GM12878 (cell line): ENCODE measurements at regions of chr7 and their contacts with region 1.

Region 1: GRCh38 chr7:876167-876967 is at the start of gene GET4:
- DNase-seq: peak; percentile 80
- ATAC-seq: peak; percentile 90
- H3K4me3 ChIP-seq: peak within 1 kb of the TSS; percentile 86
- H3K27ac ChIP-seq: peak within 1 kb of the TSS; percentile 59
- H3K4me1 ChIP-seq: no peaks in the 10 kb centered on the region; the same call in 1 of the 2 replicates
- H3K27me3 ChIP-seq: no peaks in the 10 kb centered on the region
- CTCF ChIP-seq: peak; percentile 17 to 29 (median 19); a peak in 3 of 6 replicates
- EP300 ChIP-seq: no peak; a peak in 1 of 4 replicates
- POLR2A ChIP-seq: peak; percentile 92
- RAD21 ChIP-seq: no peak
- polyA plus RNA-seq, gene GET4: 0.66 to 2.3 TPM

Region 2: GRCh38 chr7:322111-322671 is 554.2 kb before region 1 on chr7:
- CTCF ChIA-PET with region 1: interaction called, 15 read pairs
- POLR2A ChIA-PET with region 1: no interaction called
- RAD21 ChIA-PET with region 1: interaction called, 6 read pairs
- SMC1A ChIA-PET with region 1: interaction called, 3 read pairs
- in situ Hi-C with region 1: loop called (anchors 5 kb)
- intact Hi-C with region 1: loop called (anchors 1 kb)
- DNase-seq: no peak
- ATAC-seq: peak; percentile 99
- H3K4me3 ChIP-seq: no peak overlapping the region
- H3K27ac ChIP-seq: no peak overlapping the region
- H3K4me1 ChIP-seq: no peaks in the 10 kb centered on the region
- H3K27me3 ChIP-seq: no peaks in the 10 kb centered on the region
- CTCF ChIP-seq: peak; percentile 63 to 85 (median 74); a peak in 5 of 6 replicates
- EP300 ChIP-seq: no peak
- POLR2A ChIP-seq: no peak
- RAD21 ChIP-seq: peak; percentile 91

Region 3: DNA sequence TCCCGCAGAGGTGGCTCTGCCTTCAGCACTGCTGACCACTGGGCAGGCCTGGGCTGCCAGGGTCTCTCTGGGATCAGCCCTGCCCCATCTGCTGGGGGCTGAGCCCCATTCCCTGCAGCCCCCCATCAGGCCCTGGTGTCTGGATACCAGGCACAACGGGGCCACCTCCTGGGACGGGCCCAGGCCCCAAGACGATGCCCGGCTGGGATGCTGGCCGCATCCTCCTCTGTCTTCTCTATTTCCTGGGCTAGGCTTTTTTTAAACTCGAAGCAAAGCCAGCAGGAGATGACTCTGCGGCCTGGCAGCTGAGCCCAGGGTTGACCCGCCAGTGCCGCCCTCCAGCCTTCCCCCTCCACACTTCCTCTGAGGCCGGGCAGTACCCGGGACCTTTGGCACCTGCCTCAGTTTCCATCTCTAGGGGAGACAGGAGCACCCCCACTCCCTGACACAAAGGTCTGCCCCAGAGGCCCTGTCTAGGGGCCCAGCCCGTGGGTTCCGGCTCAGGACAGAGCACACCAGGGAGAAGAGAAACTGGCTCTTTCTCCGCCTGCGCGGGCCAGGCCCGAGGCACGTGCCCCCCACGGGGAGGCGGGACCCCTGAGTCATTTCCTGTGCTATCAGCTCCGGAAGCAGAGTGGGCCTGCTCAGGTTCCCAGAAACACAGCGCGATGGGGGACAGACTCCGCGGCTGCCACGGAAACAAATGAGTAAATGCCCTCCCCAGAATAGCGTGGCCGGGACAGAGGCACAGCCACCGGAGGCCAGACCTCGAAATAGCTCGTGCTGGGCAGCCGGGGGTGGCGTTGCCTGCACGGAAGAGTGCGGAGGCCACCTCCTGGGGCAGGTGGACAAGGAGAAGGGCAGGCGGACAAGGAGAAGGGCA is 272.1 kb before region 1 on chr7:
- CTCF ChIA-PET with region 1: no interaction called
- POLR2A ChIA-PET with region 1: no interaction called
- RAD21 ChIA-PET with region 1: no interaction called
- SMC1A ChIA-PET with region 1: no interaction called
- in situ Hi-C with region 1: no loop called
- intact Hi-C with region 1: loop called (anchors 5 kb)
- DNase-seq: peak; percentile 71
- ATAC-seq: peak; percentile 81
- H3K4me3 ChIP-seq: peak overlapping the region; percentile 80
- H3K27ac ChIP-seq: peak overlapping the region; percentile 98
- H3K4me1 ChIP-seq: peaks cover 49% of the 10 kb centered on the region
- H3K27me3 ChIP-seq: no peaks in the 10 kb centered on the region
- CTCF ChIP-seq: no peak
- EP300 ChIP-seq: no peak; a peak in 1 of 4 replicates
- POLR2A ChIP-seq: peak; percentile 96
- RAD21 ChIP-seq: no peak

Region 4: GRCh38 chr7:816300-816750 is 60.0 kb before region 1 on chr7:
- CTCF ChIA-PET with region 1: interaction called, 15 read pairs
- POLR2A ChIA-PET with region 1: no interaction called
- RAD21 ChIA-PET with region 1: interaction called, 7 read pairs
- SMC1A ChIA-PET with region 1: interaction called, 3 read pairs
- in situ Hi-C with region 1: no loop called
- intact Hi-C with region 1: loop called (anchors 5 kb)
- DNase-seq: peak; percentile 84
- ATAC-seq: peak; percentile 94
- H3K4me3 ChIP-seq: peak overlapping the region; percentile 57; the same call in 1 of the 2 replicates
- H3K27ac ChIP-seq: no peak overlapping the region; the same call in 1 of the 2 replicates
- H3K4me1 ChIP-seq: peaks cover 24% of the 10 kb centered on the region
- H3K27me3 ChIP-seq: no peaks in the 10 kb centered on the region
- CTCF ChIP-seq: no peak
- EP300 ChIP-seq: no peak
- POLR2A ChIP-seq: peak; percentile 83
- RAD21 ChIP-seq: no peak

Region 5: DNA sequence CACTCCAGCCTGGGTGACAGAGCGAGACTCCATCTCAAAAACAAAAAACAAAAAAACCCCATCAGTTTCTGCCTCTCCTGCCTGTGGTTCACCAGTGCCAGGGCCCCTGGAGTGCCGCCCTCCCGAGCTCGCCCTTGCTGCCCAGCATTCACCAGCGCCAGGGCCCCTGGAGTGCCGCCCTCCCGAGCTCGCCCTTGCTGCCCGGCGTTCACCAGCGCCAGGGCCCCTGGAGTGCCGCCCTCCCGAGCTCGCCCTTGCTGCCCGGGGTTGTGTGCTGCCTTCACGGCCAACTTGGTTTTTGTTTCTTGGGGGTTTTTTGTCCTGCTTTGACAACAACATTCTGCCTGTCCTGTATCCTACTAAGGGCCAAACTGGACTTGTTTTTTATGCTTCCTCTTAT is 13.3 kb before region 1 on chr7:
- CTCF ChIA-PET with region 1: interaction called, 13 read pairs
- POLR2A ChIA-PET with region 1: no interaction called
- RAD21 ChIA-PET with region 1: interaction called, 3 read pairs
- SMC1A ChIA-PET with region 1: interaction called, 3 read pairs
- in situ Hi-C with region 1: no loop called
- intact Hi-C with region 1: no loop called
- DNase-seq: no peak
- ATAC-seq: no peak
- H3K4me3 ChIP-seq: no peak overlapping the region
- H3K27ac ChIP-seq: no peak overlapping the region
- H3K4me1 ChIP-seq: no peaks in the 10 kb centered on the region
- H3K27me3 ChIP-seq: no peaks in the 10 kb centered on the region
- CTCF ChIP-seq: no peak
- EP300 ChIP-seq: no peak
- POLR2A ChIP-seq: no peak
- RAD21 ChIP-seq: no peak

Region 6: DNA sequence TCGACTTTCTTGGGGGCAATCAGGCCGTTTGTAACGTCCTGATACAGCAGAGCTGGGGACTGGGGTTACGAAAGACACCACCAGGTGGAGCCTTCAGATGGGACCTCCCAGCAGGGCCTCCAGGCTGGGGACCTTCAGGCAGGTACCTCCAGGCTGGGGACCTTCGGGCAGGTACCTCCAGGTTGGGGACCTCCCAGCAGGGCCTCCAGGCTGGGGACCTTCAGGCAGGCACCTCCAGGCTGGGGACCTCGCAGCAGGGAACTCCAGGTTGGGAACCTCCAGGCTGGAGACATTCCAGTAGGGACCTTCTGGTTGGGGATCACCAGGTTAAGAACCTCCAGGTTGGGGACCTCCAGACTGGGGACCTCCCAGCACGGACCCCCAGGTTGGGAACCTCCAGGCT is 144.5 kb after region 1 on chr7:
- CTCF ChIA-PET with region 1: no interaction called
- POLR2A ChIA-PET with region 1: no interaction called
- RAD21 ChIA-PET with region 1: no interaction called
- SMC1A ChIA-PET with region 1: no interaction called
- in situ Hi-C with region 1: no loop called
- intact Hi-C with region 1: no loop called
- DNase-seq: no peak
- ATAC-seq: no peak
- H3K4me3 ChIP-seq: no peak overlapping the region
- H3K27ac ChIP-seq: no peak overlapping the region
- H3K4me1 ChIP-seq: peaks cover 31% of the 10 kb centered on the region
- H3K27me3 ChIP-seq: no peaks in the 10 kb centered on the region
- CTCF ChIP-seq: peak in 2 of 3 experiments; percentile 19 to 24; a peak in 2 of 6 replicates
- EP300 ChIP-seq: no peak
- POLR2A ChIP-seq: no peak
- RAD21 ChIP-seq: peak; percentile 41; the same call in 1 of the 2 replicates